Endothelial cell of umbilical vein (primary cell): ENCODE measurements at regions of chr3 and their contacts with region 1.

Region 1: DNA sequence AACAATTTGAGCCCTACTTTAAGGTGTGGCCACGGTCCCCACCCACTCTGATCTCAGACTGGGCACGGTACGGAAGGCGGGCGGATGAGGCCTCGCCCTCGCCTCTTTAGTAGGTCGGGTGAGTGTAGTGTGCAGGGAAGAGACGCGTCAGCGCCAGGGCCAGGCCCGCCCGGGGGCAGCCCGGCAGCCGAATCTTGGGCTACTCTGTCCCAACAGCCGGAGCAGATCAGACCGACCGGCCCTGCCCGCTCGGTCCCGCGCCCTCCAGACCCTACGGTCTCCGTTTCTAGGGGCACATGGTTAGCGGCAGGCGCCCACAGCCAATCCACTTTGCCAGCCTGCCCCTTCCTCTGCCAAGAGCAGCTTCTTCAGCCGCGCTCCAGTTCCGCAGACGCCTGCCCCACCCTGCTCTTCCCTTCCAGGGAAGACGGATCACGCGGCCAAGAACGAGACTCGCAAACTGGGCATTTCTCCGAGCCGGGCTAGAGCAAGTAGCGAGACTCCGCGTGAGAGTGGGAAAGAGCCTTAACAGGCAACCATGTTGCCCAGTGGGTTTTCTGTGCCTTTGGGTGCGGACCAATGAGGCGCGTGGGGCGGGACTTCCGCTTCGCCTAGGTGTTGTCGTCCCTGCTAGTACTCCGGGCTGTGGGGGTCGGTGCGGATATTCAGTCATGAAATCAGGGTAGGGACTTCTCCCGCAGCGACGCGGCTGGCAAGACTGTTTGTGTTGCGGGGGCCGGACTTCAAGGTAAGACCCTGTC is at the start of gene RNF13:
- DNase-seq: peak; percentile 97
- H3K4me3 ChIP-seq: peak within 1 kb of the TSS; percentile 59 to 84 (median 83)
- H3K27ac ChIP-seq: peak within 1 kb of the TSS; percentile 65
- H3K4me1 ChIP-seq: peaks cover 24% of the 10 kb centered on the region
- H3K27me3 ChIP-seq: no peaks in the 10 kb centered on the region
- CTCF ChIP-seq: no peak
- POLR2A ChIP-seq: peak; percentile 78
- total RNA-seq, gene RNF13: 27.1 and 29.5 TPM in 2 replicates

Region 2: DNA sequence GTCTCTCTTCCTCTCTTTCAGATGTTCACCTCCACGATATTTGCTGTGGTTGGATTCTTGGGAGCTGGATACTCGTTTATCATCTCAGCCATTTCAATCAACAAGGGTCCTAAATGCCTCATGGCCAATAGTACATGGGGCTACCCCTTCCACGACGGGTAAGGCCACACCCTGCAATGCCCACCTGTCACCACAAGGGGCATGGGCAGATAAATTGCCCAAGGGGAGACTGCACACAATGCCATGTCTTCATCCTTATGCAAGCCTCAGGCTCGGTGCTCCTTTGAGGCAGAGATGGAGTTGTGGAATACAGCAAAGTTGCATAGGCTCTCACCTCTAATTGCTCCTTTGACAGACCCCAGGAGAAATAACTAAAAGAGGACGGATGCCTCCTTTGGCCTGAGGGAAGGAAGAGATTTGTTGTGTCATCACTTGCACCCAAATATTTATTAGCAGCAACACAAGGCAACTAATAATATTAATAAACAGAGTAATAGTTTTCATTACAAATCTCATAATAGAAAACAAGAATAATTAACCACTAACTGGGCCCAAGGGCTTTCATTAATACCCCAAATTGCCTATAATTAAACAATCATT is 325.1 kb before region 1 on chr3:
- CTCF ChIA-PET with region 1: interaction called, 122 read pairs
- POLR2A ChIA-PET with region 1: no interaction called
- dilution Hi-C with region 1: no loop called
- intact Hi-C with region 1: no loop called
- DNase-seq: no peak
- H3K4me3 ChIP-seq: no peak overlapping the region
- H3K27ac ChIP-seq: no peak overlapping the region
- H3K4me1 ChIP-seq: peaks cover 3% of the 10 kb centered on the region
- H3K27me3 ChIP-seq: no peaks in the 10 kb centered on the region
- CTCF ChIP-seq: peak; percentile 40 to 53
- POLR2A ChIP-seq: no peak

Region 3: DNA sequence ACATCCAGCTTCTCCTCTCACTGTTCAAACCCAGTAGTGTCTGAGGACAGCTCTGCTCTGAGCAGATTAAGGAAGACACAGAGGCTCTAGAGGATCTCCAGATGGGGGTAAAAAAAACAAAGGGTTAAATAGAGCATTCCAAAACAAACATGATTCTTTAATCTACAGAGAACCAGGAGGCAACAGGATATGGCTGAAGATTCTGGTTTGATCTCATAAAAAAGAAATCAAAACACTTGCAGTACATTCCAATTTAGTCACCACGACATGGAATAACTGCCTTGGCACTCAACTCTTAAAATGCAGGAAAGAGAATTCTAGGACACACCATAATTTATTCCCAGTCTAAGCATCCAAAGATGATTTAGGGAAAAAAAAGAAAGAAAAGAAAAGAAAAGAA is 306.2 kb before region 1 on chr3:
- CTCF ChIA-PET with region 1: interaction called, 75 read pairs
- POLR2A ChIA-PET with region 1: no interaction called
- dilution Hi-C with region 1: no loop called
- intact Hi-C with region 1: loop called (anchors 1 kb)
- DNase-seq: peak; percentile 93
- H3K4me3 ChIP-seq: peak overlapping the region in 1 of 3 experiments; percentile 58
- H3K27ac ChIP-seq: peak overlapping the region; percentile 96
- H3K4me1 ChIP-seq: peaks cover 36% of the 10 kb centered on the region
- H3K27me3 ChIP-seq: no peaks in the 10 kb centered on the region
- CTCF ChIP-seq: no peak
- POLR2A ChIP-seq: peak; percentile 92

Region 4: DNA sequence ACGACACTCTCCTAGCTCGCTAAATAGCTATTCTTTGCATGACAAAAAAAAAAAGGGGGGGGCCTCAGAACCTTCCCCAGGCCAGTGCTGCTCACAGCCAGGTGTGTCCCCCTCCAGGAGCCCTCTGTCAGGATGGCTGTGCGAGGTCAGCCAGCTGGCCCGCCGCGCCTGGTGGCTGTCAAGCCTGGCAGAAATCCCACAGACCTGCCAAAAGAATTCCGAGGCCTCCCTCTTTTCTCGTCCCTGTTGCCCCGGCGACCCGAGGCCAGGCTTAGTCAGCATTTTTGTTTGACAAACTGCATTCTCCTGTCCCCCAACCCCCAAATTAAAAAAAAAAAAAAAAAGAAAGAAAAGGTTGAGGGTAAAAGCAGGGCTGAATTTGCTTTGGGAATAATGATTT is 276.4 kb before region 1 on chr3:
- CTCF ChIA-PET with region 1: interaction called, 11 read pairs
- POLR2A ChIA-PET with region 1: no interaction called
- dilution Hi-C with region 1: no loop called
- intact Hi-C with region 1: no loop called
- DNase-seq: no peak
- H3K4me3 ChIP-seq: no peak overlapping the region
- H3K27ac ChIP-seq: peak overlapping the region; percentile 20
- H3K4me1 ChIP-seq: peaks cover 79% of the 10 kb centered on the region
- H3K27me3 ChIP-seq: no peaks in the 10 kb centered on the region
- CTCF ChIP-seq: no peak
- POLR2A ChIP-seq: no peak

Region 5: DNA sequence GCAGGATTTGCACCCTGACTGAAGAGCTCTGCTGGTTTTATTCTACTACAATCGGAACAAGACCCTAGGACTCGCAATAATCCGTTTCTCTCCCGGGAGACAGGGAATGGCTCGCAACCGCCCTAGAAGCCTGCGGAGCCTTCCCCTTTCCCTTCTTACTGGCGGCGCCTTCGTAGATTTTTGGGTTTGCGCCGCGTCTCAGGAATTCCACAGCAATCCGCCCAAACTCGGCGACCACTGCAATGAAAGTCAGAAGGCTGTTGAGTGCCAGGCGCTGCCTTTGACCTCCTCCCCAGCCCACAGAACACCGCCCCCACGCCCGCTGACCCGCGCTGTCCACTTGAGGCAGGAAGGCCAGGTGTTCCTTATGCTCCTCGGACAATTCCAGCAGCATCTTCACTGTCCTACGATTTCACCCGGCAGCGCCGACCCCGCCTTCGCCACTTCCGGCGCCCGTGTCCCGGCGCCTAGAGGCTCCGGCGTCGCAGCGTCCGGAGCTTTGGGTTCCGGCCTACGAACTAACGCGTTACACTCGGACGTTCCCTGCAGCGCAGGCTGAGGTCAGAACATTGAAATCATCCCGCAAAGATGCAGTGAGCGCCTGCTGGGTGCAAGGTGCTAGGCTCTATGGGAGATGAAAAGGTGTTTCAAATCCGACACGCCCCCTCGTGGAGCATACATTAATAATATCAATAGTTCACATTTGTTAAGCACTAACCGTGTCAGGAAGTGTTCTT is 60.6 kb before region 1 on chr3 and contains the start of gene COMMD2:
- CTCF ChIA-PET with region 1: interaction called, 10 read pairs
- POLR2A ChIA-PET with region 1: no interaction called
- dilution Hi-C with region 1: no loop called
- intact Hi-C with region 1: no loop called
- DNase-seq: peak; percentile 83
- H3K4me3 ChIP-seq: peak within 1 kb of the TSS; percentile 74 to 94 (median 91)
- H3K27ac ChIP-seq: peak within 1 kb of the TSS; percentile 33
- H3K4me1 ChIP-seq: peaks cover 15% of the 10 kb centered on the region
- H3K27me3 ChIP-seq: no peaks in the 10 kb centered on the region
- CTCF ChIP-seq: peak in 1 of 2 donors; percentile 17
- POLR2A ChIP-seq: peak; percentile 86
- total RNA-seq, gene COMMD2: 42.9 and 51.0 TPM in 2 replicates

Region 6: DNA sequence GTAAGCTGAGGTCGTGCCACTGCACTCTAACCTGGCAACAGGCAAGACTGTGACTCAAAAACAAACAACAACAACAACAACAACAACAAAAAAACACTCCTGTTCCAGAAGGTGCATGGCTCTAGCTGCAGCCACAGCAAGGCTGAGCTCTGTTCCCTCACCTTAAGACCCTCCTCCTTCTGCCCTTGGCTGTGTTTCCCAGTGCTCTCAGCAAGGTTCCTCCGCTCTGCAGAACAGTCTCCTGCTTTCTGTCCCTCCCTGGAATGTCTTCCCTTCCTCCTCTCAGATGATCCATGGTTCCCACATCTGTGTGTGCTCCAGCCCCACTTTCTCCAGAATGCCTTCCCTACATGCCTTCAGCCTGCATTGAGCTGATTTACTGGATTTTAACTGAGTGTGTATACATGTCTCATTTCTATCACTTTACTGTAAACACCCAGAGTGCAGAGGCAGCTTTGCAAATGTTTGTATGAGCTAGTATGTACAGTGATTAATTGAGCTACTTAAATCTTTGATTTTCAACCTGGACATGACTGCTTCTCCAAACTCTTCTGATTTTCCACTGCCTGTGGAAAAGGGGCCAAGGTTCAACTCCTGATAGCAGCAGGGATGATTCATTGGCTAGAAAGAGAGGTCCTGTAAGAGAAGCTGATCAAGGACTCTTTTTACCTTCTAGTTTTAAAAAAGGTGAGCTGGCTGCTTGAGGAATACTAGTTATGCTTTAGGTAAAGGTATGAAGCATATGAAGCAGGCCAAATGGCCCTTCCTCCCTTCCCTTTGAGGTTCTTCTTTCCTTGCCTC is 35.2 kb before region 1 on chr3:
- CTCF ChIA-PET with region 1: interaction called, 263 read pairs
- POLR2A ChIA-PET with region 1: no interaction called
- dilution Hi-C with region 1: no loop called
- intact Hi-C with region 1: no loop called
- DNase-seq: no peak
- H3K4me3 ChIP-seq: no peak overlapping the region
- H3K27ac ChIP-seq: no peak overlapping the region
- H3K4me1 ChIP-seq: no peaks in the 10 kb centered on the region
- H3K27me3 ChIP-seq: no peaks in the 10 kb centered on the region
- CTCF ChIP-seq: no peak
- POLR2A ChIP-seq: no peak

Region 7: GRCh38 chr3:149969940-149970715 is 157.3 kb after region 1 on chr3:
- CTCF ChIA-PET with region 1: no interaction called
- POLR2A ChIA-PET with region 1: no interaction called
- dilution Hi-C with region 1: no loop called
- intact Hi-C with region 1: loop called (anchors 5 kb)
- DNase-seq: peak; percentile 90
- H3K4me3 ChIP-seq: peak overlapping the region; percentile 65 to 92 (median 88)
- H3K27ac ChIP-seq: peak overlapping the region; percentile 94
- H3K4me1 ChIP-seq: peaks cover 27% of the 10 kb centered on the region
- H3K27me3 ChIP-seq: peaks cover 0 to 3% of the 10 kb centered on the region in 2 experiments
- CTCF ChIP-seq: no peak
- POLR2A ChIP-seq: peak; percentile 30

Region 8: GRCh38 chr3:150227839-150228238 is 415.1 kb after region 1 on chr3:
- CTCF ChIA-PET with region 1: no interaction called
- POLR2A ChIA-PET with region 1: no interaction called
- dilution Hi-C with region 1: no loop called
- intact Hi-C with region 1: no loop called
- DNase-seq: peak; percentile 72
- H3K4me3 ChIP-seq: no peak overlapping the region
- H3K27ac ChIP-seq: no peak overlapping the region
- H3K4me1 ChIP-seq: peaks cover 27% of the 10 kb centered on the region
- H3K27me3 ChIP-seq: peaks cover 25 to 26% of the 10 kb centered on the region in 2 experiments
- CTCF ChIP-seq: peak; percentile 82 to 84
- POLR2A ChIP-seq: no peak